MCF 10A (cell line): ENCODE measurements at regions of chr16 and their contacts with region 1.

Region 1: GRCh38 chr16:3872216-3872895 is 8.2 kb downstream of the CREBBP start:
- DNase-seq: no peak
- H3K4me3 Mint-ChIP-seq: no peak overlapping the region
- H3K27ac Mint-ChIP-seq: no peak overlapping the region
- H3K4me1 Mint-ChIP-seq: peaks cover 48% of the 10 kb centered on the region
- H3K27me3 Mint-ChIP-seq: no peaks in the 10 kb centered on the region
- CTCF ChIP-seq: no peak

Region 2: DNA sequence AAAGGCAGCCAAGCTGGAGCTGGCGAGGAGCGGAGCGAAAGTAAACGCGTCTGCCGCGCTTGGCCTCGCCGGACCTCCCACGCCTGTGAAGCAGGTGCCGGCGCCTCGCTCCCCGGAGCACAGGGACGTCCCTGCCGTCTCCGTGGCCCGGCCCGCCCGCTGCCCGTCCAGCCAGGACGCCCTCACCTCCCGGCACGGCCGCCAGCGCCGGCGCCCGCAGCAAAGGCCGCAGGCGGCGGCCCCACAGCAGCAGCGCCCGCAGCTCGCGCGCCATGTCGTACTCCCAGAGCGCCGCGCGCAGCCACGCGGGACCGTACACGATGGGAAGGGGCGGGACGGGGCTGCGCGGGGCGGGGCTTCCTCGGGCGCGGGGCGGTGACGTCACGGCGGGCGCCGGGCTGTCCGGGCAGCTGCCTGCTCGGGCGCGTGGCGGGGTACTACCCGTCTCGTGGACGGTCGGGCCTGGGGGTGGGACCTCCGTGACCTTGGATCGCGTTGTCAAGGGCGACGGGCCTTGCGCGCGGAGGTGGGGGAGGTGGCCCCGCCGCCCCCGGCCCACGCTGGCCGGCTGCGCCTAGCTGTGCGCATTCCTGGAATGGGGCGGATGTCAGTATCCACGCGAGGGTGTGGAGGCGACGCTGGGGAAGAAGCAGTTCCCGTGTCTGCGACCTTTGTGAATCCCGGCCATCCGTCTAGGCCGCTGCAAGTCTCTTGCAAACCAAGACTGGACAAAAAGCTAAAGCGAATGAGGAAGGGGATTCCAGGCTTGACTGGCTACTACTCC is 154.9 kb before region 1 on chr16 and contains the start of gene TRAP1:
- CTCF ChIA-PET with region 1: no interaction called
- POLR2A ChIA-PET with region 1: interaction called, 10 read pairs
- intact Hi-C with region 1: no loop called
- DNase-seq: peak; percentile 71
- H3K4me3 Mint-ChIP-seq: peak within 1 kb of the TSS; percentile 84
- H3K27ac Mint-ChIP-seq: peak within 1 kb of the TSS; percentile 61
- H3K4me1 Mint-ChIP-seq: peaks cover 29% of the 10 kb centered on the region
- H3K27me3 Mint-ChIP-seq: no peaks in the 10 kb centered on the region
- CTCF ChIP-seq: no peak
- total RNA-seq, gene TRAP1: 145 and 274 TPM in 2 replicates

Region 3: GRCh38 chr16:3857189-3858043 is 14.9 kb before region 1 on chr16:
- CTCF ChIA-PET with region 1: interaction called, 4 read pairs
- POLR2A ChIA-PET with region 1: interaction called, 15 read pairs
- intact Hi-C with region 1: no loop called
- DNase-seq: peak; percentile 93
- H3K4me3 Mint-ChIP-seq: peak overlapping the region; percentile 63
- H3K27ac Mint-ChIP-seq: peak overlapping the region; percentile 28
- H3K4me1 Mint-ChIP-seq: peaks cover 48% of the 10 kb centered on the region
- H3K27me3 Mint-ChIP-seq: no peaks in the 10 kb centered on the region
- CTCF ChIP-seq: no peak